ENCODE measurements at regions of chr2 and their contacts with region 1.

Region 1: DNA sequence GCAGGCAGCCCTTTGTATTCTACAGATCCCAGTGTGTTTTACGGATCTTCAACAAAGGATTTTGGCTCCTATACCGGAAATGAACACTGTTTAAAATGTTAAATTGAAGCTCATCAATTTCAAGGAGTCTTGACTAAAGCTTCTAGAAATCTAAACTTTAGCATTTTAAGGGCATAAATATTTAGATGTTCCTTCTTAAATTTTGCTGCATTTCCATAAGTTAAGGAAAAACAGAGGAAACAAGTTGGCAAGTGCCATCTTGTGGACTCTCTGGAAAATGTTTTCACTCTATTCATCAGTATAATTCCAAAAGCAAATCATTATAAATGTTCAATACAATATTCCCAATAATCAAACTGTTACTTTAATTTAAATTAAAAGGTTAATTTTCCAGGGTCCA is 19.6 kb downstream of the CHN1 start:
- DNase-seq: peak; percentile 65
- ATAC-seq: peak; percentile 40; the same call in 1 of the 2 replicates
- H3K4me3 ChIP-seq: no peak overlapping the region
- H3K27ac ChIP-seq: peak overlapping the region; percentile 49; the same call in 1 of the 2 replicates
- H3K4me1 ChIP-seq: peaks cover 3% of the 10 kb centered on the region; the same call in 1 of the 2 replicates
- H3K27me3 ChIP-seq: no peaks in the 10 kb centered on the region
- CTCF ChIP-seq: peak; percentile 84
- POLR2A ChIP-seq: no peak
- RAD21 ChIP-seq: peak; percentile 84

Region 2: DNA sequence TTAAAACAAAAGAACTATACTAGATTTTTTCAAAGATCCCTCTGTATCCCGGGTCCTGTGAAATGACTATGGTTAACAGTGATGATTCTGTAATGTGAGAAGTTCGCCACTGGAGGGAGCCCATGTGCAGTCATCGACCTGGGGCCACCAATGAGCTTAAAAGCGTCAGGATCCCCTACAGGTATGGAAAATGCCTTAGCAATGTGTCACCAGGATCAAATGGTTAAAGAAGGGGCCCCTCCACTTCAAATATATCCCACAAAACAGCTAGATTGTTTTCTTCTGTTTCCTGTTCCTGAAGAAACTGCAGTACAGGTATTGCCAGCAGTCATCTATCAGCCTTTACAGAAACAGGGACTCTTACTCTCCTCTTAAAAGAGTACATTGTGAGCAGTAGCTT is 236.7 kb before region 1 on chr2:
- CTCF ChIA-PET with region 1: interaction called, 7 read pairs
- POLR2A ChIA-PET with region 1: no interaction called
- dilution Hi-C with region 1: loop called (anchors 25 kb)
- in situ Hi-C with region 1: no loop called
- intact Hi-C with region 1: loop called (anchors 1 kb)
- DNase-seq: peak; percentile 50
- ATAC-seq: peak; percentile 94
- H3K4me3 ChIP-seq: no peak overlapping the region
- H3K27ac ChIP-seq: no peak overlapping the region
- H3K4me1 ChIP-seq: no peaks in the 10 kb centered on the region; the same call in 1 of the 2 replicates
- H3K27me3 ChIP-seq: peaks cover 6% of the 10 kb centered on the region
- CTCF ChIP-seq: peak; percentile 77
- POLR2A ChIP-seq: no peak
- RAD21 ChIP-seq: peak; percentile 82

Region 3: GRCh38 chr2:174771631-174772471 is 213.8 kb before region 1 on chr2:
- CTCF ChIA-PET with region 1: interaction called, 53 read pairs
- POLR2A ChIA-PET with region 1: interaction called, 6 read pairs
- dilution Hi-C with region 1: loop called (anchors 25 kb)
- in situ Hi-C with region 1: loop called (anchors 5 kb)
- intact Hi-C with region 1: loop called (anchors 1 kb)
- DNase-seq: peak; percentile 82
- ATAC-seq: peak; percentile 86
- H3K4me3 ChIP-seq: no peak overlapping the region
- H3K27ac ChIP-seq: peak overlapping the region; percentile 93
- H3K4me1 ChIP-seq: peaks cover 24% of the 10 kb centered on the region
- H3K27me3 ChIP-seq: no peaks in the 10 kb centered on the region
- CTCF ChIP-seq: peak; percentile 94
- POLR2A ChIP-seq: no peak
- RAD21 ChIP-seq: peak; percentile 94

Region 4: DNA sequence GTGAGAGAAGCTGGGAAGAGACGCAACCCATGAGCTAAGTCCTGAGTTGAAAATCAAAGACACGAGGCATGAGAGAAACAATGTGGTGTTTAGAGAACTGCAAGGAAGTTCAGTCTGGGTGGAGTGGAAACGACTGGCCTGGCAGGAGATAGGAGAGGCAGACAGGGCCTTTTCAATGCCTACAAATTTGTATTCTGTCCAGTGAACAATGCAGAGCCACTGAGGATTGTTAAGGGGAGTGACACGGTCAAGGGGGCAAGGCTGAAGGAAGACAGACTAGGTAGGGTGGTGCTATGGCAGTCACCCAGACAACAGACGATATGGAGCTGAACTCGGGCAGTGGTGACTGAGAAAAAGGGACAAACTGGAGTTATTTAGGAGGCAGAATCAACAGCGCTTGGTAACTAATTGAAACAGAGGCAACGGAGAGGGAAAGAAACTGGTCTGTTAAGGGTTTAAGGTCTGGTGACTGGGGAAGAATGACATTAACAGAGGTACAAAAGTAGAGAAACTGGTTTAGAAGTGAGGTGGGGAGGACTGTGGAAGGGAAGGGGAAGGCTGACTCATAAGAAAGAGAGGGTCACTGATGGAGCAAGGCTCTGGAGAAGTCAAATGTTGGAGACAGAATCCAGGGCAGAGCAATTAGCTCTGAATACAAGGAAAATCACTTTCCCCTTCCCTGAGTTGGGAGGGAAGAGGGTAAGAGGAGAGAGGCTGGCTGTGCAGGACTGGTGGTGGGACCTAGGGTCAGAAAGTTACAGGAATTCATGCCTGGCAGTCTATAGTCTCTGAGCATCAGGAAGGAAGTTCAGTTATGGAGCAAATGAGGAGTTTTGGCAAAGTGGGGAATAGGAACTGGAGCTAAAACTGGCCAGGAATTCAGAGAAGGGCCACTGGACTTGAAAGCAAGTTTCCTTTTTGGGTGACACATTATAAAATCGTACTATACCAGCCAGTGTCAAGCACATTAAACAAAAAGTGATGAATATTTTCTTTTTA is 158.0 kb before region 1 on chr2:
- CTCF ChIA-PET with region 1: no interaction called
- POLR2A ChIA-PET with region 1: no interaction called
- dilution Hi-C with region 1: no loop called
- in situ Hi-C with region 1: no loop called
- intact Hi-C with region 1: loop called (anchors 5 kb)
- DNase-seq: peak; percentile 49
- ATAC-seq: peak; percentile 64
- H3K4me3 ChIP-seq: no peak overlapping the region; the same call in 1 of the 2 replicates
- H3K27ac ChIP-seq: peak overlapping the region; percentile 95
- H3K4me1 ChIP-seq: peaks cover 14% of the 10 kb centered on the region
- H3K27me3 ChIP-seq: no peaks in the 10 kb centered on the region
- CTCF ChIP-seq: no peak
- POLR2A ChIP-seq: no peak
- RAD21 ChIP-seq: no peak

Region 5: DNA sequence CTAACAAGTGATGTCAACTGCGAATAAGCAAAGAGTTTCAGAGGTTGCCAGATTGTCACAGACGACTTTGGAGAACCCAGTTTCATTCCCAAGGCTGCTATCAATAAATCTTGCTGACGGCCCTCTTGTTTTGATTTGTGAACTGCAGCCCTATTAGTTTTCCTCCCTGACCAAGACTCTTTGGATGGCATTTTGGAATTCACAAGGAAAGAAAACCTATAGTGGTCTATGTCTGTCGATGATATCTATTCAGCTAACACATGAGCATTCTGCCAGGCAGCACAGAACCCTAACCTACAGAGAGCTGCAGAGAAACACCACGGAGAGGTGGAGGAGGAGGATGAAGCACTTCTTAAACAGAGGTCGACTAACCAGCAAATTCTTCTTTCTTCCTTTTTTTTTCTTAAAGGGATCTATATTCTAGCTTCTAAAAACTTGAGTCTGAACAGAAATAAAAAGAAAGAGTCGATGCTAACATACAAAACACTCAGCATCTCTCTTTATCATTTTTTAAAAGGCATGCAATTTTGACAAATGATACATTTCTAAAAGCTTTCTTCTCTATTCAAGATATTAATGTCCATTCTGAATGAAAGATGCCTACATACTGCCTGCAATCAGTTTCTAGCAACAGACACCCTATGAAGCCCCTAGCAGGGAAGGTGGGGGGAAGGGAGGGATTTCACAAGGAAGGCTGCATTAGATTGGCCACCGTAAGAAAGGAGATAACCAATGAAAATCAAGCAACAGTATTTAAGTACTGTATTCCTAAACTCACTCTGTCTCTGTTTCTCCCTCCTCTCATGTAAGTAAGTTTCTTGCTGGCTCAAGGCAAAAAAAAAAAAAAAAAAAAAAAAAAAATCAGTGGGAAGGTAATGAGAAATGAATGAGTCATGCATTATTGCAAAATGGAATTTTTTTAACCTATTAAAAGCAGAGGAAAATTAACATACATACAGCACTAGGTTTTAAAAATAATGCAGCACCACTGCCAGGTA is 138.4 kb before region 1 on chr2:
- CTCF ChIA-PET with region 1: no interaction called
- POLR2A ChIA-PET with region 1: no interaction called
- dilution Hi-C with region 1: no loop called
- in situ Hi-C with region 1: no loop called
- intact Hi-C with region 1: loop called (anchors 1 kb)
- DNase-seq: peak; percentile 97
- ATAC-seq: peak; percentile 96
- H3K4me3 ChIP-seq: peak overlapping the region; percentile 65
- H3K27ac ChIP-seq: peak overlapping the region; percentile 75; the same call in 1 of the 2 replicates
- H3K4me1 ChIP-seq: peaks cover 3% of the 10 kb centered on the region; the same call in 1 of the 2 replicates
- H3K27me3 ChIP-seq: no peaks in the 10 kb centered on the region
- CTCF ChIP-seq: no peak
- POLR2A ChIP-seq: peak; percentile 37; the same call in 1 of the 2 replicates
- RAD21 ChIP-seq: no peak

Region 6: DNA sequence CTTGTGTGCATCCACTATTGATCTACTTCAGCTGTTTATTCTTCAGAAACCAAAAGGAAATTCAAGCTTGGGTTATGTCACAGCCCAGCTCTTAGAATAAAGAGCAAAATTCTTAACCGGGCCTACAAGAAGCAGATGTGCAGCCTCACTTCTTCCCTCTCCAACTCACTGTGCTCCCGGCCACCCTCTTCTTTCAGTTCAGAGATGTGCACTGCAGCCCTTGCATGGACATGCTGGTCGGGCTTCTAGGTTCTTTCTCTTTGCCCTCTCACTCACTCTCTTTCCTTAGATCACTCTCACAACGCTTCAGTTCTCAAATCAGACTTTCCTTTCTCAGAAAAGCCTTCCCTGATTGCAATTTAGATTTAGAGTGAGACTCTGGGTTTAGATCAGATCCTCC is 84.6 kb before region 1 on chr2:
- CTCF ChIA-PET with region 1: no interaction called
- POLR2A ChIA-PET with region 1: interaction called, 5 read pairs
- dilution Hi-C with region 1: no loop called
- in situ Hi-C with region 1: no loop called
- intact Hi-C with region 1: loop called (anchors 5 kb)
- DNase-seq: peak; percentile 36
- ATAC-seq: peak; percentile 88
- H3K4me3 ChIP-seq: peak overlapping the region; percentile 19; the same call in 1 of the 2 replicates
- H3K27ac ChIP-seq: peak overlapping the region; percentile 45; the same call in 1 of the 2 replicates
- H3K4me1 ChIP-seq: peaks cover 2% of the 10 kb centered on the region; the same call in 1 of the 2 replicates
- H3K27me3 ChIP-seq: no peaks in the 10 kb centered on the region
- CTCF ChIP-seq: no peak
- POLR2A ChIP-seq: no peak
- RAD21 ChIP-seq: no peak